ENCODE measurements at regions of chr16 and their contacts with region 1.

Region 1: DNA sequence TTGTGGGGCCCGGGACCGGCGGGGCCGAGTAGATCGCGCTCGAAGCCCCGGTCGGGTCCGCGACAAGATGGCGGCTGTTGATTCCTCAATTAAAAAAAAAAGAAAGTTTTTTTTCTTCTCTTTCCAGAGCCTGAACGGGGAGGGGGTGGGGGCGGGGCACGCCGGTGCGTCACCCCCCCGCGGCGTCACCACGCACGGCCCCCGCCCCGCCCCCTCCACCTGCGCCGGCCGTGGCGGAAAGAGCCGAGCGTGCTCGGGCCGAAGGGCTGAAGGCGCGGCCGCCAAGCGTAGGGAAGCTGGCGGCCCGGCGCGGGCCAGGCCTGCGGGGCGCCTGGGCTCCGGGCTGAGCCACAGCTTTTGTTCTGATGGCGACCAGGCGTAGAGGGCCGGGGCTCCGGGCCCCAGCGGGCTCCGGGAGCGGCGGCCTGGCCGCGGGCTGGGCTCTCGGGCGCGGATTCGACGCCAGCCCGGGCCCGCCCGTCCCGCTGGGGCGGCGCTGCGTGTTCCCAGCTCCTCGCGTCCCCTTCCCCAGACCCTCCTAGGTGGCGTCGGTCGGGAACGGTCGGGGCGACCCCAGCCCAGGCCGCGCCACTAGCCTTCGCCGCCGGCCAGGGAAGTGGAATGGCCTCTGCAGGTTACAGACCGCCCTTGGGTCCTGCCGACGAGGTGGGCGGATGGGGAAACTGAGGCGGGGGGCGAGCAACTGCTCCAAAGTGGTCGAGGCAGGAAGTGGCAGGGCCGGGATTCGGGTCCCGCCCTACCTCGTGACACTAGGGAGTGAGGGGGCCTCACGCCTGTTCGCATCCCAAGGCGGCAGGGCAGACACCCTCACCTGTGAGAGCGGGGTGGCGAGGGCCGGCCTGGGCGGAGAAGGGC is at the start of gene CREBBP:
- DNase-seq: peak; percentile 90
- H3K4me3 ChIP-seq: peak within 1 kb of the TSS; percentile 73 to 81
- H3K27ac ChIP-seq: peak within 1 kb of the TSS; percentile 27 to 92
- H3K4me1 ChIP-seq: peaks cover 14% of the 10 kb centered on the region
- H3K27me3 ChIP-seq: no peaks in the 10 kb centered on the region
- CTCF ChIP-seq: no peak
- POLR2A ChIP-seq: no peak
- total RNA-seq, gene CREBBP: 141 to 185 TPM

Region 2: GRCh38 chr16:3690470-3690928 is 190.4 kb before region 1 on chr16:
- intact Hi-C with region 1: loop called (anchors 5 kb)
- DNase-seq: peak; percentile 94
- H3K4me3 ChIP-seq: no peak overlapping the region
- H3K27ac ChIP-seq: peak overlapping the region in 1 of 2 donors; percentile 48
- H3K4me1 ChIP-seq: no peaks in the 10 kb centered on the region
- H3K27me3 ChIP-seq: no peaks in the 10 kb centered on the region
- CTCF ChIP-seq: peak; percentile 93 to 94 (median 93)
- POLR2A ChIP-seq: no peak